Heart left ventricle (tissue), 16 donors: ENCODE measurements at regions of chr3 and their contacts with region 1.

Region 1: DNA sequence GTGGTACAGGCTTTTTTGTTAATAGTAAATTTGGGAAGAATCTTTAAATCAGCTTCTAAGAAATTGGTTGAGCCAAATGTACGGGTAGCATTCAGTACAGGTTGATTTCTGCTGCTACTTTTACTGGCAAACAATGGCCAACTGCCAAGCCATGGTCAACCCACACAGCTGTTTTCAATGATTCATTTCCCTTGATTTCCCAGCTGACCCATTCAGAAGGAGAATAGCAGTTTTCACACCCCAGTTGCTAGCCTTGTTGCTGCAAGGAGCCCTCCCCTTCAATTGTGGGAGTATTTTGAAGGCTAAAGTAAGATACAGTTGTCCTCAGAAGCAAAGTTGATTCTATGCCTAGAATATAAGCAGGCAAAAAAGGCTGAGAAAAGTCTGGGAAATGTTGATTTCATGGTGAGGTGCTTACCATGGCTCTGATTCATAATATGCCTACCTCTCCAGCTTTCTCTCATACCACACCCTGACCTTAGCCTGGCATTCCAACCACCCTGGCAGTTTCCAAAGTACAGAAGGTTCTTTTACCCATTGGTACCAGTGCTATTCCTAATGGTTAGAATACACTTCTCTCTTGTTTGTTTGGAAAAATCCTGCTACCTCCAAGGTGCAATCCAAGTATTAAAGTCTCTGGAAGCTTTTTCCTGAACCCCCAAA is 320.3 kb upstream of the TGFBR2 start:
- DNase-seq: peak; percentile 60 to 86 (median 76)
- ATAC-seq: peak; percentile 83 to 95 (median 94)
- H3K4me3 ChIP-seq: no peak overlapping the region
- H3K27ac ChIP-seq: peak overlapping the region in 11 of 12 donors; percentile 2 to 81 (median 57)
- H3K4me1 ChIP-seq: peaks cover 0 to 62% (median 23%) of the 10 kb centered on the region in 12 donors
- H3K27me3 ChIP-seq: no peaks in the 10 kb centered on the region
- CTCF ChIP-seq: no peak
- POLR2A ChIP-seq: no peak

Region 2: GRCh38 chr3:30236011-30236410 is 50.1 kb before region 1 on chr3:
- intact Hi-C with region 1: loop called in 5 of 10 experiments (anchors 5 kb)
- DNase-seq: no peak
- ATAC-seq: no peak
- H3K4me3 ChIP-seq: no peak overlapping the region
- H3K27ac ChIP-seq: no peak overlapping the region
- H3K4me1 ChIP-seq: peaks cover 0 to 32% (median 13%) of the 10 kb centered on the region in 12 donors
- H3K27me3 ChIP-seq: no peaks in the 10 kb centered on the region
- CTCF ChIP-seq: no peak
- POLR2A ChIP-seq: no peak

Region 3: GRCh38 chr3:30342319-30343060 is 56.4 kb after region 1 on chr3:
- intact Hi-C with region 1: loop called in 1 of 10 experiments (anchors 5 kb)
- DNase-seq: peak in 2 of 5 donors; percentile 24 to 58
- ATAC-seq: peak; percentile 80 to 95 (median 94)
- H3K4me3 ChIP-seq: no peak overlapping the region
- H3K27ac ChIP-seq: peak overlapping the region; percentile 6 to 70 (median 51)
- H3K4me1 ChIP-seq: peaks cover 0 to 32% (median 16%) of the 10 kb centered on the region in 12 donors
- H3K27me3 ChIP-seq: no peaks in the 10 kb centered on the region
- CTCF ChIP-seq: no peak
- POLR2A ChIP-seq: no peak

Region 4: DNA sequence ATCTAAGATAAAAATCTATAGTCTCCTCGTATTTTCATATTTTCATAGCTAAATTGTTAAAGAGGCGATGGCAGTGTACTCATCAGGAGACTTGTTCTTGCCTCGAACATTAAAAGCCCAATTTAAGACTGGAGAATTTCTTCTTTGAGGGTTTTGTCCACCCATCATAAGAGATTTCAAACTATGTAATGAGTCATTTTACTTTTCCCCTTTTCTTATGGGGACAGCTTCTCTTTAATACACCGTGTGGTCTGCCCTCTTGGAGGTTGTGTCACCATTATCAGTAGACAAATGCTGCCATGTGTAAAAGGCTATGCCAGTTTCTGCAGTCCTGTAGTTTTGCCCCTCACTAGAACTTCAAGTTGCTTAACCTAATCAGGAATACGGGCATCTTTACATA is 337.2 kb after region 1 on chr3:
- intact Hi-C with region 1: loop called in 1 of 10 experiments (anchors 5 kb)
- DNase-seq: no peak
- ATAC-seq: no peak
- H3K4me3 ChIP-seq: no peak overlapping the region
- H3K27ac ChIP-seq: peak overlapping the region in 7 of 12 donors; percentile 0 to 92 (median 15)
- H3K4me1 ChIP-seq: peaks cover 10 to 100% (median 85%) of the 10 kb centered on the region in 12 donors
- H3K27me3 ChIP-seq: no peaks in the 10 kb centered on the region
- CTCF ChIP-seq: no peak
- POLR2A ChIP-seq: no peak